ENCODE measurements at regions of chr1 and their contacts with region 1.

Region 1: GRCh38 chr1:33606272-33606671 is 133.8 kb downstream of the ZSCAN20 start:
- DNase-seq: peak in 4 of 5 donors; percentile 62 to 77 (median 73)
- ATAC-seq: peak; percentile 70 to 88 (median 76)
- H3K4me3 ChIP-seq: no peak overlapping the region
- H3K27ac ChIP-seq: peak overlapping the region in 9 of 12 donors; percentile 34 to 88 (median 76)
- H3K4me1 ChIP-seq: peaks cover 0 to 35% (median 8%) of the 10 kb centered on the region in 12 donors
- H3K27me3 ChIP-seq: no peaks in the 10 kb centered on the region
- CTCF ChIP-seq: no peak
- POLR2A ChIP-seq: no peak

Region 2: GRCh38 chr1:33300673-33301072 is 305.6 kb before region 1 on chr1:
- intact Hi-C with region 1: loop called in 7 of 10 experiments (anchors 5 to 10 kb)
- DNase-seq: peak in 2 of 5 donors; percentile 58 to 67
- ATAC-seq: peak in 2 of 4 donors; percentile 35 to 52
- H3K4me3 ChIP-seq: no peak overlapping the region
- H3K27ac ChIP-seq: peak overlapping the region in 3 of 12 donors; percentile 7 to 56 (median 45)
- H3K4me1 ChIP-seq: peaks cover 0 to 27% (median 12%) of the 10 kb centered on the region in 12 donors
- H3K27me3 ChIP-seq: no peaks in the 10 kb centered on the region
- CTCF ChIP-seq: no peak
- POLR2A ChIP-seq: no peak

Region 3: DNA sequence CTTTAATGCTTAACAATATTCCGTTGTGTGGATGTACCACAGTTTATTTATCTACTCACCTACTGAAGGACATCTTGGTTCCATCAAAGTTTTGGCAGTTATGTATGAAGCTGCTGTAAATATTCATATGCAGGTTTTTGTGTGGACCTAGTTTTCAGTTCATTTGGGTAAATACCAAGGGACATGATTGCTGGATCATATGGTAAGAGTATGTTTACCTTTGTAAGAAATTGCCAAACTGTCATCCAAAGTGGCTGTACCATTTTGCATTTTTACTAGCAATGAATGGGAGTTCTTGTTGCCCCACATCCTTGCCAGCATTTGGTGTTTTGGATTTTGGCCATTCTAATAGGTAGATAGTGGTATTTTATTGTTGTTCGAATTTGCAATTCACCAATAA is 123.9 kb before region 1 on chr1:
- intact Hi-C with region 1: loop called in 2 of 10 experiments (anchors 5 kb)
- DNase-seq: no peak
- ATAC-seq: no peak
- H3K4me3 ChIP-seq: no peak overlapping the region
- H3K27ac ChIP-seq: no peak overlapping the region
- H3K4me1 ChIP-seq: peaks cover 0 to 2% (median 0%) of the 10 kb centered on the region in 12 donors
- H3K27me3 ChIP-seq: no peaks in the 10 kb centered on the region
- CTCF ChIP-seq: no peak
- POLR2A ChIP-seq: no peak

Region 4: DNA sequence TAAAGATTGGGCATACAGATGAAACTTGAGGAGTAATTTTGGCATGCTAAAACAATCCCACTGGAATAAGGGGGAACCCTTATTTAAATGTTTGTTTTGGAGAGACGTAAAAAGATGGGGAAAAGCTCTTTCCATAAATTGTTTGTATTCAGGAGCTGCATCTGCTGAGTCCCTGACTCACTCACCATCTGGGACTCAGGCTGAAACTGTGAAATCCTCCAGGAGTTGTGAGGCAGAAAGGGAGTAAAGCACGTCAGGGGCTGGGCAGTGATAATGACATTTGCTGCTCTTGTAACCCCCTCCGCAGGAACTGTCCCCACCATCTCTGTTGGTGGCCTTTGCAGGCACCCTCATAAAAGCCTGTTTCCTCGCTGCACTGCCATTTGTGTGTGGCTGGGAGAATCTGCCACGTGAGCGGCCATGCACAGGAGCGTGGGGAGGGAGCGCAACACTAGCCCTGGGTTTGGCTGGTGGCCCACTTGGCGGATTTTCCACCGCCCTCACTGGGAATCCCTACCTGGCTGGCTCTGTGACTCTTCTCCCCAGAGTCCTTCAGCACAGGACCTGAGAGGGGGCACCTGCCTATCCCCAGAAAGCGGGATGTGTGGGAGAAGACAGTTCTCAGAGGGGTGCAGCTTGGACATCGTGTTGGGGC is 88.5 kb before region 1 on chr1:
- intact Hi-C with region 1: no loop called
- DNase-seq: no peak
- ATAC-seq: no peak
- H3K4me3 ChIP-seq: no peak overlapping the region
- H3K27ac ChIP-seq: no peak overlapping the region
- H3K4me1 ChIP-seq: peaks cover 0 to 15% (median 7%) of the 10 kb centered on the region in 12 donors
- H3K27me3 ChIP-seq: no peaks in the 10 kb centered on the region
- CTCF ChIP-seq: no peak
- POLR2A ChIP-seq: no peak

Region 5: DNA sequence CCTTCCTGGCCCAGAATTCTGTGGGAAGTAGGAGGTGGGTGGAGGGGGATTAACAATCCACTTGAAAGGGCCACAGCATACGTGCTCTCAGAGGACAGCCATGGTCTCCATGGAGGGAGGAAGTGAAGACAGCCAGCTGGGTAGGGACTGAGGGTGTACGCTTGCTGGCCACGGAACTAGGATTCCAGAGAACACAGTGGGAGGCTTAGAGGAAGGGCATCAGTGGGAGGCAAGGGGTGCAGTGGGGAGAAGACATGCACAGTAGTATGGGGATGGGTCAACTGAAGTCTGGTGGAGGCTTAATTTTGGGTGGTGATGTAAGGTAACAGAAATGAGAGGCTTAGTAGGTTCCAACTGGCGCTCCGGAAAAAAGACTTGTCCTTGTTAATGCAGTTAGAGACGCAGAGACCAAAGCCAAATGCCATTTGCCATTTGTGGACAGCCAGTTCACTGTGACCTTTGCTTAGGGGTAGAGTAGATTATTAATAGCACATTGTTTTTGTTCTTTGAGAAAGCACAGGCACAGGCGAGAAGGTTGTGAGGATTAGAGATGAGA is 30.9 kb before region 1 on chr1:
- intact Hi-C with region 1: loop called in 4 of 10 experiments (anchors 2 to 5 kb)
- DNase-seq: peak in 4 of 5 donors; percentile 65 to 80 (median 70)
- ATAC-seq: peak; percentile 91 to 93 (median 92)
- H3K4me3 ChIP-seq: peak overlapping the region in 1 of 12 donors; percentile 7
- H3K27ac ChIP-seq: peak overlapping the region; percentile 77 to 98 (median 90)
- H3K4me1 ChIP-seq: peaks cover 6 to 76% (median 41%) of the 10 kb centered on the region in 12 donors
- H3K27me3 ChIP-seq: no peaks in the 10 kb centered on the region
- CTCF ChIP-seq: no peak
- POLR2A ChIP-seq: no peak

Region 6: DNA sequence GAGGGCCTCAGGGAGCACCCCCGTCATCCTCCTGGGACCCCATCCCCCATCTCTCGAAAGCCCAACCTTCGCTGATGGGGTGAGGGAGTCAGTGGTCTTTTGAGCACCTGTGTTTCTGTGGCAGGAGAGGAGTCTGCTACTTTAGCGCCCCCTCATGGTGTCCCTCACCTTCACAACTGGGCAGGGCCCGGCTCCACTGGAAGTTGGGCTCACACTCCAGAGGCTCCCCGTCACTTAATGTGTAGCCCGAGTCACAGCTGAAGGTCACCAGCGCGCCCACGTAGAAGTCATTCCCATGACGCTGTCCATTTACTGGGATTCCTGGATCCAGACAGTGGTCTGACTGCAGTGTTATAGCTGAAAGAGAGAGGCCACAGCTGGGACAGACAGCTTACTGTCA is 118.1 kb after region 1 on chr1:
- intact Hi-C with region 1: no loop called
- DNase-seq: no peak
- ATAC-seq: no peak
- H3K4me3 ChIP-seq: no peak overlapping the region
- H3K27ac ChIP-seq: no peak overlapping the region
- H3K4me1 ChIP-seq: no peaks in the 10 kb centered on the region
- H3K27me3 ChIP-seq: no peaks in the 10 kb centered on the region
- CTCF ChIP-seq: no peak
- POLR2A ChIP-seq: no peak

Measured in heart left ventricle (tissue), 16 donors.